ENCODE measurements at regions of chr1 and their contacts with region 1.

Region 1: DNA sequence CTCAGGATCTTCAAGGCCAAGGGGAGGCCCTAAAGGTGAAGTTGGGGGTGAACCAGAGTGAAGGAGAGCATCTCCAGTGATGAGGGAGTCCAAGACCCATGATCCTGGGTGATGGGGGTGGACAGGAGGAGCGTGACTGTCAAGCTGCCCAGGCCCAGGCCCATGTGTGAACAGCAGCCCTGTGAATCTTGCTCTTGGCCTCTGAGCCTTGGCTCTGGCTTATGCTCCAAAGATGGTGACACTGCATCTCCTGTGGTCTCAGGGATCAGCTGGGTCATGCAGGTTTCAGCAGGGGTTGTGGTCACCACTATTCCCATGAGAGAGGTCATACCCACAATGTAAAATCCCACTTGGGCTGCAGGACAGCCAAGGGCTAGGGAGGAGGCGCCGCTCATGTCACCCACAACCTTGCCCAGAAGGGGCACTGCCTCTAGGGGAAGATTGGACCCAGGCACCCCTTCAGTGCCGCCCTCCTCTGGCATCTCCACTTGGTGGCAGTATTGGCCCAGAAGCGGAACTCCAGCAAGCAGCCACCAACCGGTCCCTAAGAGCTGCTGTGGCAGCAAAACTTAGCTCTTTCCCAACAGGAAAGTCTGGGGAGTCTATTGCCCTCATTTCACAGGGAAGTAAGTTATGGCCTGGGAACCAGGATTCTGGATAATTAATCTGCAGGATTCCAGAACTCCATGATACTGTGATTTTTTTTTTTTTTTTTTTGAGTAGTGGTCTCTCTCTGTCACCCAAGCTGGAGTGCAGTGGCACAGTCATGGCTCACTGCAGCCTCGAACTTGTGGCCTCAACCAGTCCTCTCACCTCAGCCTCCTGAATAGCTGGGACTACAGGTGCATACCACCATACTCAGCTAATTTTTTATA is 7.5 kb upstream of the WNT3A start:
- DNase-seq: peak; percentile 94
- H3K4me3 Mint-ChIP-seq: no peak overlapping the region
- H3K27ac Mint-ChIP-seq: no peak overlapping the region
- H3K4me1 Mint-ChIP-seq: peaks cover 17% of the 10 kb centered on the region
- H3K27me3 Mint-ChIP-seq: peaks cover 1% of the 10 kb centered on the region
- CTCF ChIP-seq: peak; percentile 100

Region 2: GRCh38 chr1:226892524-226892875 is 1106.8 kb before region 1 on chr1:
- CTCF ChIA-PET with region 1: no interaction called
- POLR2A ChIA-PET with region 1: no interaction called
- intact Hi-C with region 1: no loop called
- DNase-seq: no peak
- H3K4me3 Mint-ChIP-seq: no peak overlapping the region
- H3K27ac Mint-ChIP-seq: no peak overlapping the region
- H3K4me1 Mint-ChIP-seq: no peaks in the 10 kb centered on the region
- H3K27me3 Mint-ChIP-seq: no peaks in the 10 kb centered on the region
- CTCF ChIP-seq: no peak

Region 3: GRCh38 chr1:227895828-227896685 is 103.2 kb before region 1 on chr1:
- CTCF ChIA-PET with region 1: no interaction called
- POLR2A ChIA-PET with region 1: no interaction called
- intact Hi-C with region 1: no loop called
- DNase-seq: no peak
- H3K4me3 Mint-ChIP-seq: no peak overlapping the region
- H3K27ac Mint-ChIP-seq: no peak overlapping the region
- H3K4me1 Mint-ChIP-seq: peaks cover 18% of the 10 kb centered on the region
- H3K27me3 Mint-ChIP-seq: peaks cover 13% of the 10 kb centered on the region
- CTCF ChIP-seq: no peak

Region 4: GRCh38 chr1:227987181-227987580 is 12.1 kb before region 1 on chr1:
- CTCF ChIA-PET with region 1: interaction called, 38 read pairs
- POLR2A ChIA-PET with region 1: interaction called, 12 read pairs
- intact Hi-C with region 1: no loop called
- DNase-seq: no peak
- H3K4me3 Mint-ChIP-seq: no peak overlapping the region
- H3K27ac Mint-ChIP-seq: no peak overlapping the region
- H3K4me1 Mint-ChIP-seq: no peaks in the 10 kb centered on the region
- H3K27me3 Mint-ChIP-seq: peaks cover 26% of the 10 kb centered on the region
- CTCF ChIP-seq: no peak

Region 5: DNA sequence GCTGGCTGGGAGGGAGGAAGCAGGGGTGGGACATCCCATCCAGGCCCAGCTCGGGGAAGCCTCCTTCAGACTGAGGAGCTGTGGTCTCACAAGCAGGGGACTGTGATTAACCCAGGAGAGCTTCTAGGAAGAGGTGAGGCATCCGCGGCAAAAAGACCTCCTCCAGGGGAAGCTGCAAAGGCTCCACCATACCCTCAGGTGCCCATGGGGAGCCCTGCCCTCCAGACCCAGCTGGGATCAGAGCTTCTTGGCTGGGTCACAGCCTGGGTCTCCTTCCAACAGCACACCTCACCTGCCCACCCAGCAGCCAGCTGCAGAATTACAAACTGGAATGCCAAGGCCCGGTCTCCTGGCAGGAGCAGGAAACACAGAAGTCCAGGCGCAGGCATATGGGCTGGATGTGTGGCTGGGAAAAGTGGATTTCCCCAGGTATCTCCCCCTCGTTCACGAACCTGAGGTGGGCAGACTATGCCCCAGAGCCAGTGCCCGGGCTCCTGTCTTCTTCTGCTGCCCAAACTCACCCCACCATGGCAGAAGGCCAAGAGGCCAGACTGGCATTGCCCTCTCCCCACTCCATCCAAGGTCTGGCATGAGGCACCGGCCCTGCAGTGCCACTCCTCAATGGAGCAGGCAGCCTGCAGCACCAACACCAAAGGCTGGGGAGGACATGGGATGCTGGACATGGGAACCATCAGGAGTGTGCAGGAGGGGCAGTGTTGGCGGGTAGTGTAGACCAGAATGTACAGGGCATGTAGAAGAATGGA is 67.8 kb after region 1 on chr1:
- CTCF ChIA-PET with region 1: interaction called, 37 read pairs
- POLR2A ChIA-PET with region 1: no interaction called
- intact Hi-C with region 1: no loop called
- DNase-seq: no peak
- H3K4me3 Mint-ChIP-seq: no peak overlapping the region
- H3K27ac Mint-ChIP-seq: no peak overlapping the region
- H3K4me1 Mint-ChIP-seq: no peaks in the 10 kb centered on the region
- H3K27me3 Mint-ChIP-seq: peaks cover 32% of the 10 kb centered on the region
- CTCF ChIP-seq: no peak

Region 6: GRCh38 chr1:228097328-228098081 is 98.2 kb after region 1 on chr1:
- CTCF ChIA-PET with region 1: interaction called, 72 read pairs
- POLR2A ChIA-PET with region 1: interaction called, 7 read pairs
- intact Hi-C with region 1: loop called (anchors 1 kb)
- DNase-seq: no peak
- H3K4me3 Mint-ChIP-seq: no peak overlapping the region
- H3K27ac Mint-ChIP-seq: no peak overlapping the region
- H3K4me1 Mint-ChIP-seq: peaks cover 40% of the 10 kb centered on the region
- H3K27me3 Mint-ChIP-seq: no peaks in the 10 kb centered on the region
- CTCF ChIP-seq: no peak

Region 7: GRCh38 chr1:228131766-228132165 is 132.5 kb after region 1 on chr1:
- CTCF ChIA-PET with region 1: interaction called, 55 read pairs
- POLR2A ChIA-PET with region 1: interaction called, 6 read pairs
- intact Hi-C with region 1: loop called (anchors 1 kb)
- DNase-seq: no peak
- H3K4me3 Mint-ChIP-seq: no peak overlapping the region
- H3K27ac Mint-ChIP-seq: no peak overlapping the region
- H3K4me1 Mint-ChIP-seq: peaks cover 10% of the 10 kb centered on the region
- H3K27me3 Mint-ChIP-seq: peaks cover 18% of the 10 kb centered on the region
- CTCF ChIP-seq: no peak

Region 8: GRCh38 chr1:228212966-228213844 is 213.9 kb after region 1 on chr1:
- CTCF ChIA-PET with region 1: no interaction called
- POLR2A ChIA-PET with region 1: no interaction called
- intact Hi-C with region 1: loop called (anchors 1 kb)
- DNase-seq: peak; percentile 92
- H3K4me3 Mint-ChIP-seq: peak overlapping the region; percentile 88
- H3K27ac Mint-ChIP-seq: peak overlapping the region; percentile 74
- H3K4me1 Mint-ChIP-seq: peaks cover 8% of the 10 kb centered on the region
- H3K27me3 Mint-ChIP-seq: no peaks in the 10 kb centered on the region
- CTCF ChIP-seq: peak; percentile 69

Region 9: DNA sequence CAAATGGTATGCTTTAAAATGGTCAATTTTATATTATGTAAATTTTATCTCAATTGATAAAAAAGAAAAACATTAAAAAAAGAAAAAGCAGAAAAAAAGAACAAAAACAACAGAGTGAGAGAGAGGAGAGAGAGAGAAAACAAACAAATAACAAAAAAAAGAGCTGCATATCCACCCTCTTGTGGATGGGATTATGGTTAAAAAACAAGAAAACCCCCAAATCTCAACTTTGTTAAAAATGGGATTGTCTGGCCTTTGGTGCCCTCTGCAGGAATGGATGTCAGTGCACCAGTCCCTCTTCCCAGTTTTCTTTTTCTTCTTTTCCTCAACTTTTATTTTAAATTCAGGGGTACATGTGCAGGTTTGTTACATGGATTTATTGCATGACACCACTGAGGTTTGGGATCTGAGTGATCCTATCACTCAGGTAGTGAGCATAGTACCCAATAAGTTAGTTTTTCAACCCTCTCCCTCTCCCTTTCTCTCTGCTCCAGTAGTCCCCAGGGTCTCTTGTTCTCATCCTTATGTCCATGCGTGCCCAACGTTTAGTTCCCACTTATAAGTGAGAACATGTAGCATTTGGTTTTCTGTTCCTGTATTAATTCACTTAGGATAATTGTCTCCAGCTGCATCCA is 516.0 kb after region 1 on chr1:
- CTCF ChIA-PET with region 1: interaction called, 20 read pairs
- POLR2A ChIA-PET with region 1: no interaction called
- intact Hi-C with region 1: loop called (anchors 1 kb)
- DNase-seq: peak; percentile 65
- H3K4me3 Mint-ChIP-seq: no peak overlapping the region
- H3K27ac Mint-ChIP-seq: no peak overlapping the region
- H3K4me1 Mint-ChIP-seq: peaks cover 9% of the 10 kb centered on the region
- H3K27me3 Mint-ChIP-seq: peaks cover 75% of the 10 kb centered on the region
- CTCF ChIP-seq: peak; percentile 97

Measured in MCF 10A (cell line).